IMR-90 (cell line): ENCODE measurements at regions of chr22 and their contacts with region 1.

Region 1: DNA sequence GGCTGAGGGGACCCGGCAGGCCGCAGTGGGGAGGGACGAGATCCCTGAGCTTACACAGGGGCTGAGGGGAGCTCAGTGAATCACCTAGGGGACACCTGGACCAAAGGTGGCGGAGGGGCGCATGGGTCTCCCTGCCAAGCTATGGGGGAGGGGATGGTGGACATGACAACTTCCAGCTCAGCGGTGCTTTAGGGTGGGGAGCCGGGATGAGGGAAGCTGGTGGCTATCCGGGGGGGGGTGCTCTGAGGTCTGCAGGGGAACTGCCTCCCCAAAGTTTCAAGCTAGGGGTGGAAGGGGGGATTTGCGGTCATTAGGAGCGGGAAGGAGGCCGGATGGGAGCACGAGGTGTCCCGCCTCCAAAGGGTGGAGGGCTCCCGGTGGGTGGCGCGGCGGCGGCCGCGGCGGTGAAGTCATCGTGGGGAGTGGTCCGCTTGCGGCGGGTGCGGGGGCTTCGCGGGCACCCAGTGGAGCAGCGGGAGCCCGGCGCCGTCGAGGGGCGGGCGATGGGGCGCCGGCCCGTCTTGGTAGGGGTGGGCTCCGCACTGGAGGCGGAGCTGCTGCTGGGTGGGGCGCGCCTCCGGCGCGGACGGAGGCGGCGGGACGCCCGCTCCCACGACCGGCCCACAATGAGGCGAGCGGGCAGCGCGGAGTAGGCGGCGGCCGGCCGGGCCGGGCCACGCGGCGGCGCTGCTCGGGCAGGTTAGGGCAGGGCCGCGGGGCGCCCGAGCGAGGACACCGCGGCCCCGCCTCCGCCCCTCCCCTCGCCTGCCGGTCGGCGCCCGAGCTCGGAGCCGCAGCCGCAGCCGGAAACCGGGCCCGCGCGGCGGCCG is at the start of gene MICALL1:
- DNase-seq: peak; percentile 67
- ATAC-seq: peak; percentile 84
- H3K4me3 ChIP-seq: peak within 1 kb of the TSS; percentile 97
- H3K27ac ChIP-seq: peak within 1 kb of the TSS; percentile 87
- H3K4me1 ChIP-seq: peaks cover 24% of the 10 kb centered on the region
- H3K27me3 ChIP-seq: no peaks in the 10 kb centered on the region
- CTCF ChIP-seq: peak; percentile 46
- POLR2A ChIP-seq: peak; percentile 73; the same call in 1 of the 2 replicates
- RAD21 ChIP-seq: no peak
- total RNA-seq, gene MICALL1: 12.2 and 12.4 TPM in 2 replicates

Region 2: DNA sequence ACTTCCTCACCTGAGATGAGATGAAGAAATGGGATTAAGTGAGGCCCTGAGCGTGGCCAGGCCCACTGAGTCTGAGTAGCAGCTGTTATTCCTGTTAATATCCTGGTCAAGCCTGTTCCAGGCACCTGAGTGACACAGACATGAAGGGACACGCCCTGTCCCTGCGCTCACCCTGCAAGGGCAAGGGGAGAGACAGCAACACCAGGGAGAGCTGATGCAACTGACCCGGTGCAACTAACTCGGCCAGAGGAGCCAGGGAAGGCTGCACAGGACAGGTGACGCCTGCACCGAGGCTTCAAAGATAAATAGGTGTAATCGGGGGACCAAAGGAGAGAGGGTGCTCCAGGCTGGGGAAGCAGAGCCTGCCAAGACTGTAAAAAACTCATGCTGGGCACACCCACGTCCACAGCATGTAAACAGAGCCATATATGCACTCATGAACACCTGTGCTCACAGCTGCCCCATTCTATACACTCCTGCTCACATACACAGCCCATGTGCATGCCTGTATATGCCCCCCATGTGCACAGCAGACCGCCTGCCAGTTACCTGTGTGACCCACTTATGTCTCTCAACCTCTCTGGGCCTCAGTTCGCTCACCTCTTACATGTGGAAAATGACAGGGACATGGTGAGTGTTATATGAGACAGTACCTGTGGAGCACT is 120.8 kb before region 1 on chr22:
- CTCF ChIA-PET with region 1: no interaction called
- POLR2A ChIA-PET with region 1: no interaction called
- dilution Hi-C with region 1: no loop called
- in situ Hi-C with region 1: no loop called
- intact Hi-C with region 1: no loop called
- DNase-seq: no peak
- ATAC-seq: no peak
- H3K4me3 ChIP-seq: no peak overlapping the region
- H3K27ac ChIP-seq: no peak overlapping the region
- H3K4me1 ChIP-seq: peaks cover 5% of the 10 kb centered on the region; the same call in 1 of the 2 replicates
- H3K27me3 ChIP-seq: no peaks in the 10 kb centered on the region
- CTCF ChIP-seq: no peak
- POLR2A ChIP-seq: no peak
- RAD21 ChIP-seq: no peak

Region 3: GRCh38 chr22:37933711-37934376 is 28.1 kb after region 1 on chr22:
- CTCF ChIA-PET with region 1: interaction called, 6 read pairs
- POLR2A ChIA-PET with region 1: no interaction called
- dilution Hi-C with region 1: no loop called
- in situ Hi-C with region 1: no loop called
- intact Hi-C with region 1: loop called (anchors 1 kb)
- DNase-seq: peak; percentile 86
- ATAC-seq: peak; percentile 99
- H3K4me3 ChIP-seq: no peak overlapping the region
- H3K27ac ChIP-seq: peak overlapping the region; percentile 48
- H3K4me1 ChIP-seq: peaks cover 16% of the 10 kb centered on the region
- H3K27me3 ChIP-seq: no peaks in the 10 kb centered on the region
- CTCF ChIP-seq: peak; percentile 99
- POLR2A ChIP-seq: no peak
- RAD21 ChIP-seq: peak; percentile 69

Region 4: GRCh38 chr22:37954686-37955085 is 48.9 kb after region 1 on chr22:
- CTCF ChIA-PET with region 1: no interaction called
- POLR2A ChIA-PET with region 1: interaction called, 14 read pairs
- dilution Hi-C with region 1: no loop called
- in situ Hi-C with region 1: no loop called
- intact Hi-C with region 1: no loop called
- DNase-seq: no peak
- ATAC-seq: no peak
- H3K4me3 ChIP-seq: no peak overlapping the region
- H3K27ac ChIP-seq: no peak overlapping the region
- H3K4me1 ChIP-seq: peaks cover 5% of the 10 kb centered on the region
- H3K27me3 ChIP-seq: no peaks in the 10 kb centered on the region
- CTCF ChIP-seq: no peak
- POLR2A ChIP-seq: no peak
- RAD21 ChIP-seq: no peak